ENCODE measurements at regions of chr14 and their contacts with region 1.

Region 1: DNA sequence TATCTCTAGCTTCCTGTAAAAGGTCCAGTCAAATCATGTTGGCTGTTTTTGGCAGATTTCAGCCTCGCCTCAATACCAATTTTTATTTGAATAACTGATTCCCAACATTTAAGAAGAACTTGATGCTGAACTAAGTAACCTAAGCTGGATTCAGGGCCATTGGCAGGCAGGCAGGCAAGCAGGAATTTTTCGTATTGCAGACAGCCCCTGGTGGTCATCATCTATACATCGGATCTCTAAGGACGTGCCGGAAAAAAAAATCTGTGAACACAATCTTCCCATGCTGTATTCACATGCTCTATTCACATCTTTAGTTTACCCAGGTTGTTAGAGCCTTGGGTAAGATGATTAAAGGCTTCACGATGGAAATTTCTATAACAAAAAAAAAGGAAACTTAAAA is 7.0 kb downstream of the VCPKMT start:
- DNase-seq: no peak
- H3K4me3 ChIP-seq: no peak overlapping the region
- CTCF ChIP-seq: no peak
- POLR2A ChIP-seq: no peak

Region 2: GRCh38 chr14:49862089-49862673 is 247.2 kb before region 1 on chr14:
- intact Hi-C with region 1: loop called (anchors 5 kb)
- DNase-seq: peak; percentile 90 to 98
- H3K4me3 ChIP-seq: peak overlapping the region; percentile 71
- CTCF ChIP-seq: peak in 2 of 3 donors; percentile 97 to 100
- POLR2A ChIP-seq: no peak

Region 3: GRCh38 chr14:49915085-49915484 is 194.3 kb before region 1 on chr14:
- intact Hi-C with region 1: no loop called
- DNase-seq: no peak
- H3K4me3 ChIP-seq: no peak overlapping the region
- CTCF ChIP-seq: no peak
- POLR2A ChIP-seq: no peak

Region 4: GRCh38 chr14:50425816-50426215 is 316.5 kb after region 1 on chr14:
- intact Hi-C with region 1: no loop called
- DNase-seq: no peak
- H3K4me3 ChIP-seq: no peak overlapping the region
- CTCF ChIP-seq: no peak
- POLR2A ChIP-seq: no peak